Ovary (tissue), 10 donors: ENCODE measurements at regions of chr20 and their contacts with region 1.

Region 1: GRCh38 chr20:56983821-56984220 is 282.6 kb downstream of the BMP7 start:
- DNase-seq: no peak
- H3K4me3 ChIP-seq: no peak overlapping the region
- H3K27ac ChIP-seq: no peak overlapping the region
- H3K4me1 ChIP-seq: no peaks in the 10 kb centered on the region
- H3K27me3 ChIP-seq: no peaks in the 10 kb centered on the region
- CTCF ChIP-seq: no peak
- EP300 ChIP-seq: no peak
- POLR2A ChIP-seq: no peak

Region 2: GRCh38 chr20:56574531-56575142 is 409.2 kb before region 1 on chr20:
- intact Hi-C with region 1: loop called in 1 of 4 experiments (anchors 5 kb)
- DNase-seq: peak in 1 of 5 donors; percentile 10
- H3K4me3 ChIP-seq: no peak overlapping the region
- H3K27ac ChIP-seq: no peak overlapping the region
- H3K4me1 ChIP-seq: no peaks in the 10 kb centered on the region
- H3K27me3 ChIP-seq: no peaks in the 10 kb centered on the region
- CTCF ChIP-seq: no peak
- EP300 ChIP-seq: no peak
- POLR2A ChIP-seq: no peak